Head of caudate nucleus (tissue), 42 donors: ENCODE measurements at regions of chr16 and their contacts with region 1.

Region 1: GRCh38 chr16:61936522-61936921 is 99.7 kb downstream of the CDH8 start:
- DNase-seq: peak in 29 of 42 donors; percentile 15 to 79 (median 39)

Region 2: DNA sequence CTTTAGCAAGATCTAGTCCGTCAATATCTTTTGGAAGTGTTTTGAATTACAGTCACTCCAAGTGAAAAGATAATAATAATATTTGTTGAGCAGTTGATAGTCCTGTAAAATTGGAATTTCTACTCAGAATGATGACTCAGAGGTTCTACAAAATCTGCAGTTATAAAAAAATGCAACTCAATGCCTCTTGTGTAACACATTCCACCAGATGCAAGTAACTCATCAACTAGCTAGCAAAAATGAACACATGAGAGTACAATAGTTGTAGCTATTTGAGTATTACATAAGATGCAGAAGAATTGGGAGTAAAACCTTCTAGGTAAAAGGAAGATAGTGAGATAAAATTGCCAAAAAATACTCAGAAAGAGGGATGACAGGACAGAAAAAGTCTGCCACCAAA is 77.5 kb before region 1 on chr16:
- intact Hi-C with region 1: no loop called
- DNase-seq: no peak

Region 3: DNA sequence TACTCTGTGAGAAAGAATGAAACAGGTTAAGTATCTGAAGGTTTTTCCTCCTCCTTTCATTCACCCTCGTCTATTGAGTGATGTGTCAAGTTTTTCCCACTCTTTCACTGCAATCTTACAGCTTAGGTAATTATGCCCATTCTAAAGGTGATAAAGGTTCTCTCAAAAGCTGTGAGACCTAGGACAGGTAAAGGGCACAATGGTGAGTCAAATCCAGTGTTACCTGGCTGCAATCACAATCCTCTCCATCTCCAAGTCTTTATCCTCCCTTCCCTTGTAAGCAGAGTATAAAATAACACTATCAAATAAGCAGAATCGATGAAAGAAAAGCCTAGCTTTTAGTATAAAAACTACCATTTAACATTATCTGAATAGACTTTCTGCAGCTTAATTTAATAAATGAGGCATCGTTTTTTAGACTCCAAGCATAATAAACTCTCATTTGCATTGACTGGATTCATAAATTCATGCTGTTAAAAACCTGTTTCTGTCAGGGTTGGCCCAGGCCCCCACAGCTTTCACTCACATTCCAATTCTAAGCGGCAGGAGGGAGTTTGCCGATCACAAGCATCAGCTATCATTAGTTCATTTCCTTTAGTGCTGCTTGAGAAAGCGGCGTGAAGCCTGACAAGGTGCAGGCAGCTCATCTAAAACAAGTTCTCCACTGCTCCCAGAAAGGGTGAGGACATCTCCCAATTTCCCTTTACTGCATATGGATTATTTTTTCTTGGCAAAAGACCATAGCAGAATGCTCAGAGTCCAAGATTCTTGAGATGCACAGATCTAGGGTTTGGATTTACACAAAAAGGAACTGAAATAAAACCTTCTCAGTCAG is 31.9 kb after region 1 on chr16:
- intact Hi-C with region 1: no loop called
- DNase-seq: peak in 9 of 42 donors; percentile 9 to 42 (median 16)

Region 4: GRCh38 chr16:62036101-62036801 is 99.7 kb after region 1 on chr16 and contains the start of gene CDH8:
- intact Hi-C with region 1: loop called (anchors 10 kb)
- DNase-seq: peak; percentile 57 to 89 (median 76)